Right ventricle myocardium inferior (tissue), 1 donor: ENCODE measurements at regions of chr21 and their contacts with region 1.

Region 1: GRCh38 chr21:39088831-39089380 is 94.3 kb downstream of the PSMG1 start:
- DNase-seq: no peak
- ATAC-seq: no peak

Region 2: GRCh38 chr21:39022863-39023693 is 65.8 kb before region 1 on chr21:
- intact Hi-C with region 1: loop called (anchors 1 kb)
- DNase-seq: peak; percentile 85
- ATAC-seq: peak; percentile 89

Region 3: GRCh38 chr21:39033878-39034602 is 54.9 kb before region 1 on chr21:
- intact Hi-C with region 1: no loop called
- DNase-seq: no peak
- ATAC-seq: peak; percentile 41

Region 4: DNA sequence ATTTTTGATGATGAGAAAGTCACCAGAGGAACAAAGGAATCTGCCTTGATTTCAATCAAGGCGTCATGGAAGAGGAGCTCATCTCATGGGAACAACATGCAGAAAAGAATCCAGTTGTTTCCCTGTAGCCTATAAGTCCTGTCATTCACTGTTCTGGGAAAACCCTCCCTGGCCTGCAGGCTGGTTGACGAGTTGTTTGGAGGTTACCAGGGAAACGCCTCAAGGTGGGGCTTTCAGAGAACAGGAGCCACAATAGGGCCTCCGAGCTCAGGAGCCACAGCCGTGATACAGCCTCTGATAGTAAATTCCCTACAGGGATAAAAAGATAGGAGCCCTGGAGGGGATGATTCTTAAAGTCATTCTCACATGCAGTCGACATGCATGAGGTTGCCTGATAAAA is 40.8 kb before region 1 on chr21:
- intact Hi-C with region 1: no loop called
- DNase-seq: no peak
- ATAC-seq: no peak

Region 5: DNA sequence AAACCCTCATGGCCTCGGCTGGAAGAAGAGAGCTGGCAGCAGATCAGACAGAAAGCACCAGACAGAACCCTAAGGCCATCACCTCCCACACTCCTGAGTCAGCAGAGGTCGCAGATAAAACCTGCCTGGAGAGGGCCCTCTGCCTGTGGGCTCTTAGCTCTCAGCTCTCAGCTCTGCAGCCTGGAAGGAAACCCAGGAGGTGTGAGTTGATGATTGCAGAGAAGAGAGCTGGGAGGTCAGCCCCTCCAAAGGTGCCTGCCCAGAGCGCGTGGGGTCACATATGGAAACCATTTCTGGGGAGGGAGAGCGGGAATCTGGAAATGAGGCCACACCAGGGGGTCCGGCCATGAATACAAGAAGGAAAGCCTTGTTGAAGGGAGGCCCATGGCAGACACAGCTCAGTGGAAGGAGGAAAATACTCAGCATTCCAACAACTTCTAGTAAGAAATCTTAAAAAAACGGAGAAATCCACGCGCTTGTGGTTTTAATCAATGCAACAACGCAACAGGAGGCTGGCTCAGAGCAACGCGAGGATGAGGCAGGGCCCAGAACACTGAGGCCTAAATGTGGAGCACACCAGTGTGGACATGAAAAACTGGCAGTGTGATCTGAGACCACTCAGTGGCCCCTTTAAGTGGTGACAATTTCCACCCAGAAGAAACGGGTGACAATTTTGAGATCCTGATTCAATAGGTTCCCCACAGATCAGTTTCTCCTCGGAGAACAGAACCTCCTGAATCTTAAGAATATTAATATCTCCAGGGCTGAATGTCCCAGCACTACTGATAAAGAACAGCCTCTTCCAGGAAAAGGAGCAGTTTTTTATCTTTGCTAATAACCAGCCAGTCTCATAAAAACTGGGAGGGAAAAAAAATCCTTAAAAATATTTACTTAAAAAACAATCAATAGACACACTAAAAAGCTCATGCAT is 48.6 kb after region 1 on chr21:
- intact Hi-C with region 1: no loop called
- DNase-seq: no peak
- ATAC-seq: no peak